Right ventricle myocardium superior (tissue), 1 donor: ENCODE measurements at regions of chr12 and their contacts with region 1.

Region 1: GRCh38 chr12:15796493-15797141 is 7.4 kb upstream of the EPS8 start:
- DNase-seq: no peak
- ATAC-seq: no peak

Region 2: GRCh38 chr12:15289192-15289591 is 507.4 kb before region 1 on chr12:
- intact Hi-C with region 1: no loop called
- DNase-seq: no peak
- ATAC-seq: no peak

Region 3: DNA sequence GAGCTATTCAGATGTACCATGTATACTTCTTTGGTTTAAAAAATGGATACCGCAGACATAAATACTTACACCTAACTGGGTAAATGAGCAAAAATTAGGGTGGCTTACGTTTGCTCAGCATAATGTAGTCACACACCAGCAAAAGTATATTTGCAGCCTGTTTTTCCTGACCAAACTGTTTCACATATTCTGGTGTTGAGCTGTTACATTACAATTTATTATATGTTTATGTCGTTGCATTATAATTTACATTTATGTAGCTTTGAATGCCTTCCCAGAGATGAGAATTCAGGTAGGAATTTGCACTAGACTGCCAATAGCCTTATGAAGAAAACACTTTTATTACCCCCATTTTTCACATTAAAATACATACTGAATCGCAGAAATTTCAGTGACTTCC is 291.0 kb before region 1 on chr12:
- intact Hi-C with region 1: no loop called
- DNase-seq: no peak
- ATAC-seq: no peak

Region 4: GRCh38 chr12:15830538-15830937 is 33.9 kb after region 1 on chr12:
- intact Hi-C with region 1: loop called (anchors 5 kb)
- DNase-seq: no peak
- ATAC-seq: no peak